Caco-2 (cell line): ENCODE measurements at regions of chr12 and their contacts with region 1.

Region 1: DNA sequence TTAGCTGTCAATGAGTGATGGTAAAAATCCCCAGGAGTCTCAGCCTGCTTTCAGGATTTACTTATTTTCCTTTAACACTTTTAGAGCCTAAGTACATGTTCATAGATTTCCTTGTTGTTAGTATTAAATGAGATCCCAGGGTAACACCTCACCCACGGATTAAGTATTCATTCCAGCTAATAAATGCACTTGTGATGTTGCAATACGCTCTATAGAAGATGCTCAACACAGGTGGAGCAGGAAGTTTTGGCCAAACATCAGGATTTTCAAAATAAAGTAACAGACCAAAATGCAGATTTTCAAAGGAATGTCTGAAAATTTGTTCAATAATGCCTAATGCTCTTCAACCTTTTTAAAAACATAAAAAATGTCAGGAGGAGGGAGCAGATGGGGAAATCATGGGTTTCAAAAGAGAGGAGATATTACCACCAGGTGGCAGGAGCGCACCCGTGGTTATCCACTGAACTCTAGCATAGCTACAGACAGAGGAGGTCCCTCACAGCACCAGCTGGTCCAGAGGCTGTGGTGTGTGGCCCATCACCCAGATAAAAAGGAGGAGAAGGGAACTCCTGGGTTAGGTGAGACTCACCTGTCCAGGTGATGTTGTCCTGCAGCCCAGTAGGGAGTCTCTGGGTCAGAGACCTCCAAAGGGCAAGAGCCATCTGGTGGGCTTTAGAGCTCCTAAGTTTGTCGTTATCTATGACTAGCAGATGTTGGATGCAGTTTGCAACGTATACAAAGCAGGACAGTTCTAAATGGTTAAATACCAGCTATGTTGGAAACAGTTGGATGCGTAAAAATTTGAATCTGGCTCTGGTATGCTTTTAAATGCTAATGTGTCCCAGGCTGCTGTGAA is 1158.4 kb upstream of the TMEM132C start:
- DNase-seq: peak; percentile 56 to 65
- H3K4me3 ChIP-seq: no peak overlapping the region
- H3K4me3 Mint-ChIP-seq: no peak overlapping the region
- H3K27ac Mint-ChIP-seq: no peak overlapping the region
- H3K4me1 ChIP-seq: no peaks in the 10 kb centered on the region
- H3K4me1 Mint-ChIP-seq: no peaks in the 10 kb centered on the region
- H3K27me3 ChIP-seq: no peaks in the 10 kb centered on the region
- H3K27me3 Mint-ChIP-seq: no peaks in the 10 kb centered on the region
- CTCF ChIP-seq: peak; percentile 44 to 48

Region 2: DNA sequence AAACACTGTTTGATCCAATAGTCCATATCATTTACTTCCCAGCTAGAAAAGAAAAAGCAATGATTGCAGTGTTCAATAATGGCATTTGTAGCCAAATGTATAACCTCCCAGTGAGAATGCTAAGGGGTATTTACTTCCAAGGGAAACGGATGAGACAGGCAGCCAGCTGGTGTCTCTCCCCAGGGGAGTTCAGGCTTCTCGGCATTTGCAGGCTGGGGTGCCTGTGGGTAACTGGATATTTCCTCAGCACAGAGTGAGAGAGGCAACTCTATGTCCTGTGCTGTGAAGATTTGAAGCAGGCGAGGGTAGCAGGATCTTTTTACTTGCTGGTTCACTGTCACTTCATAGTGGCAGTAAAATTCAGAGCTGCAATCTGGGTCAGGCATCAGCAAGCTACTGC is 297.2 kb before region 1 on chr12:
- CTCF ChIA-PET with region 1: no interaction called
- POLR2A ChIA-PET with region 1: no interaction called
- intact Hi-C with region 1: no loop called
- DNase-seq: no peak
- H3K4me3 ChIP-seq: no peak overlapping the region
- H3K4me3 Mint-ChIP-seq: no peak overlapping the region
- H3K27ac Mint-ChIP-seq: no peak overlapping the region
- H3K4me1 ChIP-seq: no peaks in the 10 kb centered on the region
- H3K4me1 Mint-ChIP-seq: no peaks in the 10 kb centered on the region
- H3K27me3 ChIP-seq: no peaks in the 10 kb centered on the region
- H3K27me3 Mint-ChIP-seq: peaks cover 8% of the 10 kb centered on the region
- CTCF ChIP-seq: no peak

Region 3: GRCh38 chr12:126926023-126926594 is 182.5 kb before region 1 on chr12:
- CTCF ChIA-PET with region 1: no interaction called
- POLR2A ChIA-PET with region 1: no interaction called
- intact Hi-C with region 1: loop called (anchors 2 kb)
- DNase-seq: no peak
- H3K4me3 ChIP-seq: no peak overlapping the region
- H3K4me3 Mint-ChIP-seq: no peak overlapping the region
- H3K27ac Mint-ChIP-seq: no peak overlapping the region
- H3K4me1 ChIP-seq: no peaks in the 10 kb centered on the region
- H3K4me1 Mint-ChIP-seq: no peaks in the 10 kb centered on the region
- H3K27me3 ChIP-seq: no peaks in the 10 kb centered on the region
- H3K27me3 Mint-ChIP-seq: no peaks in the 10 kb centered on the region
- CTCF ChIP-seq: no peak

Region 4: GRCh38 chr12:127293507-127294310 is 185.1 kb after region 1 on chr12:
- CTCF ChIA-PET with region 1: interaction called, 5 read pairs
- POLR2A ChIA-PET with region 1: no interaction called
- intact Hi-C with region 1: loop called (anchors 1 kb)
- DNase-seq: peak; percentile 44 to 59
- H3K4me3 ChIP-seq: no peak overlapping the region
- H3K4me3 Mint-ChIP-seq: no peak overlapping the region
- H3K27ac Mint-ChIP-seq: no peak overlapping the region
- H3K4me1 ChIP-seq: no peaks in the 10 kb centered on the region
- H3K4me1 Mint-ChIP-seq: no peaks in the 10 kb centered on the region
- H3K27me3 ChIP-seq: no peaks in the 10 kb centered on the region
- H3K27me3 Mint-ChIP-seq: no peaks in the 10 kb centered on the region
- CTCF ChIP-seq: peak; percentile 61 to 65

Region 5: GRCh38 chr12:127355061-127355841 is 246.7 kb after region 1 on chr12:
- CTCF ChIA-PET with region 1: no interaction called
- POLR2A ChIA-PET with region 1: no interaction called
- intact Hi-C with region 1: loop called (anchors 2 kb)
- DNase-seq: peak in 1 of 2 experiments; percentile 19
- H3K4me3 ChIP-seq: no peak overlapping the region
- H3K4me3 Mint-ChIP-seq: no peak overlapping the region
- H3K27ac Mint-ChIP-seq: no peak overlapping the region
- H3K4me1 ChIP-seq: no peaks in the 10 kb centered on the region
- H3K4me1 Mint-ChIP-seq: no peaks in the 10 kb centered on the region
- H3K27me3 ChIP-seq: no peaks in the 10 kb centered on the region
- H3K27me3 Mint-ChIP-seq: no peaks in the 10 kb centered on the region
- CTCF ChIP-seq: peak; percentile 32 to 45

Region 6: DNA sequence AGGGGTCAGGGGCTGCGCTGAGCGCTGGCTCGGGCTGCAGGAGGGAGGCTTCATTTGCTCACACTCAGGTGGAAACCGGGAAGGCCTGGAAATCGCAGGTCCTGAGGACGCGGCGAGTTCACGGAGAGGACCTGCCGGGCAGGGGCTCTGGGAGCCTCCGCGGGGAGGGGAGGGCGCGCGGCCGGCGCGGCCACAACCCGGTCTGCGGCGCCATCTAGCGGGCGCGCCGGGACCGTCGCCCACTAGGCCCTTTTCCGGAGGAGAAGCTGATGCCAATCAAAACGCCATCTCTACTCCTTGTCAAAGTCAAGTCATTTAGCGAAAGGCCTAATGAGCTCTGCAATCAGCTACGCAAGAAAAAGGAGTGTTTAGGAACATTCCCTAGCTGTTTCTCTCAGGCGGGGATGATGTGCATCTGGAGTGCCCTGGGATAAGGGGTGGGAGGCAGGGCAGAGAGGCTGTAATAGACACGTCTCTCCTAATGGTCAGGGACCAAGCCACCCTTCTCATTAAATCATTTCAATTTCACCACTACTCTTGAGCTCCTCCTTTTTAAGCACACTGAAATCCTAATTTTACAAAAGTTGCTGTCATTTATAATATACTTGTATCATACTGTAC is 272.6 kb after region 1 on chr12:
- CTCF ChIA-PET with region 1: interaction called, 14 read pairs
- POLR2A ChIA-PET with region 1: no interaction called
- intact Hi-C with region 1: loop called (anchors 1 kb)
- DNase-seq: peak; percentile 51 to 75
- H3K4me3 ChIP-seq: no peak overlapping the region
- H3K4me3 Mint-ChIP-seq: peak overlapping the region; percentile 33
- H3K27ac Mint-ChIP-seq: no peak overlapping the region
- H3K4me1 ChIP-seq: no peaks in the 10 kb centered on the region
- H3K4me1 Mint-ChIP-seq: no peaks in the 10 kb centered on the region
- H3K27me3 ChIP-seq: no peaks in the 10 kb centered on the region
- H3K27me3 Mint-ChIP-seq: no peaks in the 10 kb centered on the region
- CTCF ChIP-seq: peak; percentile 55 to 82

Region 7: GRCh38 chr12:127393896-127394295 is 285.3 kb after region 1 on chr12:
- CTCF ChIA-PET with region 1: no interaction called
- POLR2A ChIA-PET with region 1: no interaction called
- intact Hi-C with region 1: no loop called
- DNase-seq: no peak
- H3K4me3 ChIP-seq: no peak overlapping the region
- H3K4me3 Mint-ChIP-seq: no peak overlapping the region
- H3K27ac Mint-ChIP-seq: no peak overlapping the region
- H3K4me1 ChIP-seq: no peaks in the 10 kb centered on the region
- H3K4me1 Mint-ChIP-seq: no peaks in the 10 kb centered on the region
- H3K27me3 ChIP-seq: no peaks in the 10 kb centered on the region
- H3K27me3 Mint-ChIP-seq: peaks cover 9% of the 10 kb centered on the region
- CTCF ChIP-seq: no peak